ENCODE measurements at regions of chr11 and their contacts with region 1.

Region 1: DNA sequence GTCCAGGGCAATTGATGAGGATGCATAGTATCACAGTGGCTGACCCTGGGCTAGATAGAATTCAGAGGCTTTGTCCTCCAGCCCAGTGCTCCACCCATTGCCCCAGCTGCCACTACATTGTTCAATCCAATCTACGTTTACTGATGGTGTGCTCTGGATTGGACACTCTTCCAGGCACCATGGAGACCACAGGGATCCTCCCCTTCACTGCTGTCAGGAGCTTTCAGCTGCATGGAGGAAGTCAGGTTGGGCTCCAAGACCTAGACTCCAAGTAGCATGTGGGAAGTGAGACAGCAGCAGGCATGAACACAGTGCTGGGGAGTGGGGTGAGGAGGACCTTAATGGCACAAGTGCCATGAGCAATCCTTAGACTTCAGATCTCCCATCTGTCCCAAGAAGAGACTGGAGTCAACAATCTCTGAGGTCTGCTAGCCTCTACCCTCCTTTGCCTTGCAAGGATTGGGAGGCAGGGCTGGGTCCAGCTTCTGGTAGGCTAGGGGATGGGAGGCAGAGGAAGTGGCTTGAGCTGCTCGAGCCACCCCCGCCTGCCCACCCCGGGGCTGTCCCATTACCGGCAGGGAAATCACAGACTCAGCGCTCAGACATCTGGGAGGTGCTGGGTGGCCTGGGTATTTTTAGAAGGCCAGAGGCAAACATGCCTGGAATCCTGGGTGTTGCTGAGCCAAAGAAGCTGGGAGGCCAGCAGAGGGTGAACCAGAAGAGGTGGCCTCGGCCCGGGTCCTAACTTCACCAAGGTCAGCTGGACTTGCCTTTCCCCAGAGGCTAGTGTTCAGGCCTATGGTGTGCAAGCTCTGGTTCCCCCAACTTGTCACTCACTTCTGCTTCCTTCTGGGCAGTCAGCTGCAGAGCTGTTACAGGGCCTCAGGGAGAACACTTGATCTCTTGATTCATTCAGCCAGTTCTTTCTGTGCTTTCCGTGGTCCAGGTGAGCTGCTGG is 15.2 kb upstream of the FCHSD2 start:
- DNase-seq: no peak
- H3K4me3 ChIP-seq: no peak overlapping the region
- H3K4me3 Mint-ChIP-seq: no peak overlapping the region
- H3K27ac ChIP-seq: no peak overlapping the region
- H3K27ac Mint-ChIP-seq: peak overlapping the region in 4 of 8 donors; percentile 17 to 76 (median 64)
- H3K4me1 ChIP-seq: peaks cover 45% of the 10 kb centered on the region
- H3K4me1 Mint-ChIP-seq: peaks cover 37 to 46% (median 43%) of the 10 kb centered on the region in 3 donors
- H3K27me3 ChIP-seq: no peaks in the 10 kb centered on the region
- H3K27me3 Mint-ChIP-seq: peaks cover 0 to 3% of the 10 kb centered on the region in 2 donors

Region 2: DNA sequence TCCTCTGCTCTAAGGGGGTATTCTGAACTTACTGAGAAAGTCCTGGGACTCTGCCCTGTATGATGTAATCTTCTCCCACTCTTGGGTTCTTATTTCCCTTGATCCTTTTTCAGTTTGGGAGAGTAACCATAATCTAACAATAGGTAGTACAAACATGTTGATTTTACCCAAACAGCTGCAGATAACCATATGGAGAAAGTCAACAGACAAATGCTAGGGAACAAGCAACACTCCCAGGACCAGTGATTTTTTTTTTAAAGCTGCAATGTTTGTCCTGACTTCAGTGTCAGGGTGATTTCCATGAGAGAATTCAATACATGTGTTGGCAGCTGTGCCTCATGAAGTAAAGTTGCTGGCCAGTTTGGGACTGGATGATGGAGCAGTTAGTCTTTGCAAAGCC is 171.7 kb before region 1 on chr11:
- CTCF ChIA-PET with region 1: no interaction called
- POLR2A ChIA-PET with region 1: no interaction called
- DNase-seq: no peak
- H3K4me3 ChIP-seq: no peak overlapping the region
- H3K4me3 Mint-ChIP-seq: no peak overlapping the region
- H3K27ac ChIP-seq: no peak overlapping the region
- H3K27ac Mint-ChIP-seq: peak overlapping the region in 2 of 8 donors; percentile 25 to 84
- H3K4me1 ChIP-seq: no peaks in the 10 kb centered on the region
- H3K4me1 Mint-ChIP-seq: peaks cover 4 to 5% (median 5%) of the 10 kb centered on the region in 3 donors
- H3K27me3 ChIP-seq: no peaks in the 10 kb centered on the region
- H3K27me3 Mint-ChIP-seq: no peaks in the 10 kb centered on the region

Region 3: GRCh38 chr11:73141848-73142286 is 15.5 kb before region 1 on chr11:
- CTCF ChIA-PET with region 1: interaction called, 29 read pairs
- POLR2A ChIA-PET with region 1: interaction called, 3 read pairs
- DNase-seq: peak in 4 of 5 donors; percentile 52 to 75 (median 62)
- H3K4me3 ChIP-seq: peak overlapping the region; percentile 85
- H3K4me3 Mint-ChIP-seq: peak overlapping the region; percentile 86 to 99 (median 96)
- H3K27ac ChIP-seq: peak overlapping the region; percentile 88
- H3K27ac Mint-ChIP-seq: peak overlapping the region; percentile 87 to 97 (median 95)
- H3K4me1 ChIP-seq: peaks cover 32% of the 10 kb centered on the region
- H3K4me1 Mint-ChIP-seq: peaks cover 43 to 57% (median 55%) of the 10 kb centered on the region in 3 donors
- H3K27me3 ChIP-seq: no peaks in the 10 kb centered on the region
- H3K27me3 Mint-ChIP-seq: peaks cover 0 to 7% of the 10 kb centered on the region in 2 donors

Region 4: GRCh38 chr11:73170140-73170539 is 12.8 kb after region 1 on chr11:
- CTCF ChIA-PET with region 1: no interaction called
- POLR2A ChIA-PET with region 1: no interaction called
- DNase-seq: no peak
- H3K4me3 ChIP-seq: no peak overlapping the region
- H3K4me3 Mint-ChIP-seq: no peak overlapping the region
- H3K27ac ChIP-seq: no peak overlapping the region
- H3K27ac Mint-ChIP-seq: peak overlapping the region in 2 of 8 donors; percentile 29 to 56
- H3K4me1 ChIP-seq: no peaks in the 10 kb centered on the region
- H3K4me1 Mint-ChIP-seq: no peaks in the 10 kb centered on the region
- H3K27me3 ChIP-seq: no peaks in the 10 kb centered on the region
- H3K27me3 Mint-ChIP-seq: peaks cover 8 to 16% of the 10 kb centered on the region in 2 donors

Region 5: GRCh38 chr11:73198677-73199076 is 41.3 kb after region 1 on chr11:
- CTCF ChIA-PET with region 1: no interaction called
- POLR2A ChIA-PET with region 1: no interaction called
- DNase-seq: no peak
- H3K4me3 ChIP-seq: no peak overlapping the region
- H3K4me3 Mint-ChIP-seq: no peak overlapping the region
- H3K27ac ChIP-seq: no peak overlapping the region
- H3K27ac Mint-ChIP-seq: no peak overlapping the region
- H3K4me1 ChIP-seq: no peaks in the 10 kb centered on the region
- H3K4me1 Mint-ChIP-seq: no peaks in the 10 kb centered on the region
- H3K27me3 ChIP-seq: no peaks in the 10 kb centered on the region
- H3K27me3 Mint-ChIP-seq: peaks cover 5 to 10% of the 10 kb centered on the region in 2 donors

Region 6: DNA sequence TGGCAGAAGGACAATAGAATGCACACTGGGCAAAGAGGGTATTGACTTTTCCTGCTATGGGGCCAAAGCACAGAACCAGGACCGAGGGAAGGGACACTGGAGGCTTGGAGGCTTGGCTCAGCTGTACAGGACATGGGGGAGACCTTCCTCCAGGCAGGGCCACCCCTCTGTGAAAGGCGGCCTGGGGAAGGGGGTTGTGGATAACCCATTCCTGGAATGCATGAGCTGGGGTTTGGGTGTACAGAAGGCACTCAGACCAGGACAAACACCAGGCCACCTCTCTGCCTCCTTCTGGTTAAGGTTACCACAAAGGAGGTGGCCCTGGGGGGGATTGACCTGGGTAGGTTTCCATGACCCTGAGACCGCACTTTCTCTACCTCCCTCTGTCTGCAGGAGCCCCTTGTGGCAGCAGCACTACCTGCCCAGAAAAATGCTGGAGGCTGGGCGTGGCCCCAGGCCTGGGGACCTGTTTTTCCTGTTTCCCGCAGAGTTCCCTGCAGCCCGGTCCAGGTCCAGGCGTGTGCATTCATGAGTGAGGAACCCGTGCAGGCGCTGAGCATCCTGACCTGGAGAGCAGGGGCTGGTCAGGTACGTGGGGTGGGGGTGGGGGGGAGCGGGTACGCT is 70.4 kb after region 1 on chr11:
- CTCF ChIA-PET with region 1: no interaction called
- POLR2A ChIA-PET with region 1: no interaction called
- DNase-seq: no peak
- H3K4me3 ChIP-seq: no peak overlapping the region
- H3K4me3 Mint-ChIP-seq: no peak overlapping the region
- H3K27ac ChIP-seq: no peak overlapping the region
- H3K27ac Mint-ChIP-seq: peak overlapping the region in 1 of 8 donors; percentile 1
- H3K4me1 ChIP-seq: no peaks in the 10 kb centered on the region
- H3K4me1 Mint-ChIP-seq: peaks cover 0 to 4% (median 0%) of the 10 kb centered on the region in 3 donors
- H3K27me3 ChIP-seq: no peaks in the 10 kb centered on the region
- H3K27me3 Mint-ChIP-seq: peaks cover 6 to 8% of the 10 kb centered on the region in 2 donors

Measured in CD8-positive, alpha-beta memory T cell (primary cell).